HepG2 (cell line): ENCODE measurements at regions of chr17 and their contacts with region 1.

Region 1: DNA sequence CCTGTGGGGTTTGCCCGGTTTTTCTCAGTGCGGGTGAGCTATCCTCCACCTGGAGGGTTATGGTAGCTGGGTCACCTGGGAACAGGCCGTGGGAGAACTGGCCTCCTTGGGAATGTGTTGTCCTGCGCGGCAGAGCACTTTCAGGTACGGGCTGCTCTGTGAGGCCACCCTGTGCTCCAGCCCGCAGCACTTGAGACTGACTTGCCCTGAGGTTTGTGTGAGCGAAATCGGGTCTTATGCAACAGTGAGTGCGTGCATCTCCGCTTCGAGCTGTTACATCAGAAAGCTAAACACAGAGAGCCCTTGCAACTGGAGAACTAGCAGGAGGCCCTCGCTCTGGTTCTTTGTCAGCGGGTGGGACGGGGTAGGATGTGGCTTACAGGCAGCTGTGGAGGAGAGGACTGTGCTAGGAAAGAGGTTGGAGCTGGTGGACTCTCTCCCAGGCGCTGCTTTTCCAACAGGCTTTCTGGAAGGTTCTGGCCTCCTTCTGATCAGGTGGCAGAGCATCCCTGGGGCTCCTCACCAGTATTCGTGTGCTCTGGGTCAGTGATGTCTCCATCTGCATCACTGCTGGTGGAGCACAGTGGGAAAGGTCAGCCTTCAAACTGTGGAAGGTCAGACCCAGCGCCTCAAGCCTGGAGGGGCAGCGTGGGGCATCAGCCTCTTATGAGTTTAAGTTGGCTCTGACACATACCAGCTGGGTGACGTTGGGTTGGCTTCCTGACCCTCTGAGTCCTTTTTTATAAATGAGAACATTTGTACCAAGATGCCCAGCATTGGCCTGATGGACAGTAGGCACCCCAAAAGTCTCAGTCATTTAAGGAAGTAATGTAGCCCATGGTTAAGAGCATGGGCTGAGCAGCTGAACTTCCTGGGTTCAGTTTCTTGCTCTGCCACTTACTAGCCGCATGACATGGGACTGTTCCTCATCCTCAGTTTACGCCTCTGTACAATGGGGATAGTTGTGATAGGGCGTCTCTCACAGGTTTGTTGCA is 76.3 kb downstream of the KSR1 start:
- DNase-seq: peak; percentile 88
- ATAC-seq: peak; percentile 84
- H3K4me3 ChIP-seq: peak overlapping the region; percentile 13 to 55 (median 17); a peak in 4 of 6 replicates
- H3K27ac ChIP-seq: peak overlapping the region; percentile 25
- H3K4me1 ChIP-seq: peaks cover 84% of the 10 kb centered on the region
- H3K27me3 ChIP-seq: no peaks in the 10 kb centered on the region
- CTCF ChIP-seq: peak; percentile 13; the same call in 1 of the 2 replicates
- EP300 ChIP-seq: peak in 1 of 2 experiments; percentile 71; a peak in 2 of 4 replicates
- POLR2A ChIP-seq: no peak
- RAD21 ChIP-seq: no peak

Region 2: DNA sequence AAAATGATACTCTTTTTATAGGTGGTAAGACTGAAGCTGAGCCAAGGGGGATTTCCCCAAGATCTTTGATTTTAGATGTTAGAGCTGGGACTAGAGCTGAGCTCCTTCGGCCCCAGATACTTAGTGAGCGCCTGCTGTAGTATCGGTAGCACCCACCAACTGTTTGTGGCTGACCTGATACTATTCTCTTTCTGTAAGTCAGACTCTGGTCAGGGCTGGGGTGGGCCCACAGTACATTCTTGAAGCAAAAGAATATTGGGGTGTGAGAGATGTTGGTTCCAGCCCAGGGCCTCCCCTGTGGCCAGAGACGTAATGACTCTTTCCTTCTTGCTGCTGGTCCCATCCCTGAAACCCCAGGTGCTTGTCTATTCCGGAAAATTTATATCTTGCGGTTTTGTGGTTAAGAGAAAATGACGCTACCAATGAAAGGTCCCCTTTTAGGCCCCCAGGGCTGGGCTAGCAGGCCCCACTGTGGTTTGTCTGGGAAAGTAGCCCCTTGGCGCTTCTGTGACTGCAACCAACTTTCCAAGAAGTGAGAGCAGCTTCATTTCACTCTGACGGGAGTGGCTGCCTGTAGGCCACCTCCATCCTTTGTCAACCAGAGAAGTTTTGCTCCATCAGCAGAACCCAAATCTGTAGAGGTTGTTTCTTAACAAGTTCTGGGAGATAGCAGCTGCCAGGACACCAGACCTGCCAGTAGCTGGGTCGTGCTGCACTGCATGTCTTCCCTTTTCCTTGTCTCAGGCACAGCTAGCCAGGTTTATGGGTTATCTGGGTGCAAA is 12.0 kb after region 1 on chr17:
- CTCF ChIA-PET with region 1: no interaction called
- POLR2A ChIA-PET with region 1: interaction called, 13 read pairs
- in situ Hi-C with region 1: no loop called
- intact Hi-C with region 1: no loop called
- DNase-seq: no peak
- ATAC-seq: no peak
- H3K4me3 ChIP-seq: no peak overlapping the region
- H3K27ac ChIP-seq: no peak overlapping the region
- H3K4me1 ChIP-seq: peaks cover 70% of the 10 kb centered on the region
- H3K27me3 ChIP-seq: no peaks in the 10 kb centered on the region
- CTCF ChIP-seq: no peak
- EP300 ChIP-seq: no peak
- POLR2A ChIP-seq: no peak
- RAD21 ChIP-seq: no peak

Region 3: DNA sequence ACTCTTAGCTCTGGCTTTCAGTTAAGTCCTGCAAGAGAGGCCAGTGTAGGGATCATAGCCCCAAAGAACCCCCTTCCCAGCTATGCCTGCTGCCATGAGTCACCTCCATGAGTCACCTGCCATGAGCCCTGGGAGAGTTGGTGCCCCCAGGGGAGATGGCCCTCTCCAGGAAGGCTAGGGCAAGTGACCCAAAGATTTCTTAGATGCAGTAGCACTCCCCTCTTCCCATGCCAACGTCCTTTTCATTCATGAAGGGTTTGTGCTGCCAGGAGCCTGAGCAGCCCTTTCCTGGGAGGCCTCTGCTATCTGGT is 19.9 kb after region 1 on chr17:
- CTCF ChIA-PET with region 1: no interaction called
- POLR2A ChIA-PET with region 1: interaction called, 27 read pairs
- in situ Hi-C with region 1: no loop called
- intact Hi-C with region 1: no loop called
- DNase-seq: peak; percentile 45
- ATAC-seq: peak; percentile 66
- H3K4me3 ChIP-seq: no peak overlapping the region
- H3K27ac ChIP-seq: peak overlapping the region; percentile 41
- H3K4me1 ChIP-seq: peaks cover 60% of the 10 kb centered on the region
- H3K27me3 ChIP-seq: no peaks in the 10 kb centered on the region
- CTCF ChIP-seq: no peak
- EP300 ChIP-seq: no peak
- POLR2A ChIP-seq: no peak
- RAD21 ChIP-seq: no peak